ENCODE measurements at regions of chr3 and their contacts with region 1.

Region 1: DNA sequence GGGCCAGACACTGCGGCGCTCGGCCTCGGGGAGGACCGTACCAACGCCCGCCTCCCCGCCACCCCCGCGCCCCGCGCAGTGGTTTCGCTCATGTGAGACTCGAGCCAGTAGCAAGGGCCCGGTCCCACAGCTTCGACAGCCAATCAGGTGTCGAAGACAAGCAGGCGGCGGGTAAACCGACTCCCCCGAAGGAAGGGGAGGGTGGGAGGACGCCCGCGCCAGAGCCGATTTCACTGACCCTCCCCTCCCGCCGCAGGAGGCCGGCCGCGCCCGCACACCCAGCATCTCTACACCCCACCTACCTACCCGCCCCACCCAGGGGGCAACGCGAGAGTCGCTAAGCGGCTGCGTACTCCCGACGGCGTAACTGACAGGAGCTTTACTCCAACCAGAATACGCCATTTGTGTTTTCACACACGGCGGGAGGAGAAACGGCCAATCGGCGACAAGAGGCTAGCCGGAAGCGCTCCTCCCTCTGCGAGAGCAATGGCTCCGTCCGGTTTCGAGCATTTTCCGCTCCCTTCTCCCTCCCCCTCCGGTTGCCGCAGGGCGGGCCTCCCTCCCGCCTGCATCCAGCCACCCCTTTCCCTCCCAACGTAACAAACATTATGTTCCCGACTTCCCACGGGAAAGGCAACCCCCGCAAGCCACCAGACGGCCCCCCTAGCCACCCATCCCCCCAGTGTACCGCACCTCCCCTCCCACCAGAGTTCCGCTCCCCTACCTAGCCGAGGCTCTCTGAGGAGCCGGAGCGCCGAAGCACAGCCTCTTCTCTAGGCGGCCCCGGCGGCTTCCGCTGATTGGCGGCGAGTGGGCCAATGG is 504 bp upstream of the SETD5 start:
- DNase-seq: peak; percentile 99
- H3K4me3 Mint-ChIP-seq: peak overlapping the region; percentile 97
- H3K27ac Mint-ChIP-seq: peak overlapping the region; percentile 98
- H3K4me1 Mint-ChIP-seq: peaks cover 66% of the 10 kb centered on the region
- H3K27me3 Mint-ChIP-seq: no peaks in the 10 kb centered on the region

Region 2: DNA sequence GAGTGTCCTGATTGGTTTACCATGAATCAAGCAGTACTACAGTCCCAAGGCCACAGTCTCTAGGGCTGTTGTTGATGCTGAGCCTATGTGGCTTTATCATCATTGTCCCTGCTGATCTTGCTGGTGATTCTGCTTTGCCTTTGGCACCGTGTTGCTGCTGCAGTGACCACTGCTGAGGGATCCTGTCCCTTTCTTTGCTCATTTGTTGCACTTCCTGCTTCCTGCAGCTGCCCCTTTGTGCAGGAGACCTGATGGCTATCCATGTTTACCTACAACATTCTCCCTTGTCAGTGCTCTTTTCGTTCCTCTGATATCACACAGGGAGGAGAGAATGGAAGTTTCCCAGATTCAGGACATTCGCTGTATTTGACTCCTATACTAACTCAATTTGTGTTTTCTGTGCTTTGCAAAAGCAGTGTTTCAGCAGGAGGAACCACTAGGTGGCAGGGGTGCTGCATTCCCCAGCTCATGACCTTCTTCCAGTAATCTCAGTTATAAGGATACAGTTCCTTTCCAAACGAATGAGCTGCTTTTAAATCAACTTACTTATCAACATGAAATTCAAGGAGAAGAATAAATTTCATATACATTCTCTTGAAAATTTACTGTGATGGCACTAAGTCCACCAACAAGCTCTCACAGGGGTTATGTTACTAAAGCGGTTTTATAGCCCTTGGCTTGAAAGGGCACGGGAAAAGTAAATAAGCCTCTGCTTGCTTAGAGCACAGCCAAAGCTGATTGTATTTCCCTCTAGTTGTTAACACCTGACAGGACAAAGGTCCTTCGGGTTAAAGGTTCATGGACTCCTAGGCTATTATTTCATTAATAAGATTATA is 43.8 kb before region 1 on chr3:
- CTCF ChIA-PET with region 1: interaction called, 27 read pairs
- POLR2A ChIA-PET with region 1: interaction called, 18 read pairs
- DNase-seq: peak; percentile 72
- H3K4me3 Mint-ChIP-seq: no peak overlapping the region
- H3K27ac Mint-ChIP-seq: peak overlapping the region; percentile 28
- H3K4me1 Mint-ChIP-seq: peaks cover 32% of the 10 kb centered on the region
- H3K27me3 Mint-ChIP-seq: no peaks in the 10 kb centered on the region

Region 3: DNA sequence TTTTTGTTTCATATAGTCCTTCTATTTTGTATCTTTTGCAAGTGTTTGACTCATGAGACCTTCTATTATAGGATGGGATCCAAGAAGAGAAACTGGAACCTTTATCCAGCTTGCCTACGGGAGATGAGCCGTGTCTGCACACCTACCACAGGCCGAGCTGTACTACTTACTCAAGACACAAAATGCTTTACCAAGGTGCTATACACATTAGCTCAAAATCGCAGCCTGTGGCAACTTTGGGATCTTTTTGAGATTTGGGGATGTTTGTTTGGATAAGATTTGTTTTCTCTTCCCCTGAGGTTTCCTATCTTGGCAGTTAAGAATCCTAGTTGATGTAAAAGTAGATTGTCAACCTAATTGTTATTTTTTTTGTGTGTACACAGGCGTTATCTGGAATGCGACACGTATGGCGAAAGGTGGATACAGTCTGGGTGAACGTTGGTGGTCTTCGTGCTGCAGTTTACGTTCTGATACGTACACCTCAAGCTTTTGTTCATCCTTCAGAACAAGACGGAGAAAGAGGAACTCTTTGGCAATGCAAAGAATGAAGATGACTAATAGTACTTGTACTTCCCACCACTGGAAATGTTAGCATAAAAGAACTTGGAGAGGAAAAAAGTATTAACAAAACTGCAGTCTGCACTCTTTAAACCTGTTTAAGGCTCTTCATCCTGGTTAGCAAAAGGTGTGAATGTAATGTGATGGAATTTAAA is 12.6 kb before region 1 on chr3:
- CTCF ChIA-PET with region 1: no interaction called
- POLR2A ChIA-PET with region 1: interaction called, 45 read pairs
- DNase-seq: no peak
- H3K4me3 Mint-ChIP-seq: no peak overlapping the region
- H3K27ac Mint-ChIP-seq: no peak overlapping the region
- H3K4me1 Mint-ChIP-seq: peaks cover 5% of the 10 kb centered on the region
- H3K27me3 Mint-ChIP-seq: no peaks in the 10 kb centered on the region

Region 4: DNA sequence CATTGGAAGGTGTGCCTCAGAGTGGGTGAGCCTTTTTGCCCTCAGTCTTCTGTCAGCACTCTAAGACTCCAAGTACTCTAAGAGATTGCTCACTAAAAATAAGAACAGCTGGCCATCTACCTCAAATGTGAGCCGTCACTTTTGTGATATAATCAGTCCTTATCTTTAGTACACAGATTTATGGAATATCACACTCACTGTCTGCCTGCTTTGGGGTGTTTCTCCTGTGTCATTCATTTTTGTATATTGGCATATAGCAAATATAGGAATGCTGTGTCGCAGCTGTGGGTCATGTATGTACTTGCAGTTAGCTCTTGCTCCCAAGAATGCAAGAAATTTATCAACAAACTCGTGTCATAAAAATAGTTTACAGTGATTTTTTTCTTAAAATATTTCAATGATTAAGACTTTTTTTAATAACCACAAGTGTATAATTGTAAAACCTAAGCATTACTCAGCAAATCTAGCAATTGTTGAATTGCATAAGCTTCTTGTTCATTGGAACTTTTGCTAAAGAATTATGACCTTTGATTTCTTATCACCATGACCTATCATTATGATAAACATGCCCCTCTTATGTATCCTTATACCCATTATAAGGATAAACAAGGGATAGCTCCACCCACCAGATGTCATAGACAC is 19.3 kb after region 1 on chr3:
- CTCF ChIA-PET with region 1: interaction called, 8 read pairs
- POLR2A ChIA-PET with region 1: interaction called, 29 read pairs
- DNase-seq: no peak
- H3K4me3 Mint-ChIP-seq: no peak overlapping the region
- H3K27ac Mint-ChIP-seq: no peak overlapping the region
- H3K4me1 Mint-ChIP-seq: peaks cover 36% of the 10 kb centered on the region
- H3K27me3 Mint-ChIP-seq: no peaks in the 10 kb centered on the region

Region 5: GRCh38 chr3:9452417-9452816 is 55.5 kb after region 1 on chr3:
- CTCF ChIA-PET with region 1: no interaction called
- POLR2A ChIA-PET with region 1: interaction called, 49 read pairs
- DNase-seq: no peak
- H3K4me3 Mint-ChIP-seq: peak overlapping the region; percentile 44
- H3K27ac Mint-ChIP-seq: peak overlapping the region; percentile 88
- H3K4me1 Mint-ChIP-seq: peaks cover 37% of the 10 kb centered on the region
- H3K27me3 Mint-ChIP-seq: no peaks in the 10 kb centered on the region

Region 6: GRCh38 chr3:9731206-9732079 is 334.5 kb after region 1 on chr3 and contains the start of gene BRPF1:
- CTCF ChIA-PET with region 1: interaction called, 3 read pairs
- POLR2A ChIA-PET with region 1: interaction called, 11 read pairs
- DNase-seq: peak; percentile 100
- H3K4me3 Mint-ChIP-seq: peak within 1 kb of the TSS; percentile 96
- H3K27ac Mint-ChIP-seq: peak within 1 kb of the TSS; percentile 89
- H3K4me1 Mint-ChIP-seq: peaks cover 69% of the 10 kb centered on the region
- H3K27me3 Mint-ChIP-seq: no peaks in the 10 kb centered on the region
- total RNA-seq, gene BRPF1: 38.9 to 41.9 TPM